AG04449 (cell line): ENCODE measurements at regions of chr7 and their contacts with region 1.

Region 1: GRCh38 chr7:78510580-78511188 is 712.1 kb downstream of the PHTF2 start:
- DNase-seq: no peak
- H3K4me3 ChIP-seq: no peak overlapping the region
- CTCF ChIP-seq: peak; percentile 81

Region 2: GRCh38 chr7:78134256-78134655 is 376.4 kb before region 1 on chr7:
- CTCF ChIA-PET with region 1: interaction called, 15 read pairs
- POLR2A ChIA-PET with region 1: no interaction called
- DNase-seq: no peak
- H3K4me3 ChIP-seq: no peak overlapping the region
- CTCF ChIP-seq: peak; percentile 57

Region 3: DNA sequence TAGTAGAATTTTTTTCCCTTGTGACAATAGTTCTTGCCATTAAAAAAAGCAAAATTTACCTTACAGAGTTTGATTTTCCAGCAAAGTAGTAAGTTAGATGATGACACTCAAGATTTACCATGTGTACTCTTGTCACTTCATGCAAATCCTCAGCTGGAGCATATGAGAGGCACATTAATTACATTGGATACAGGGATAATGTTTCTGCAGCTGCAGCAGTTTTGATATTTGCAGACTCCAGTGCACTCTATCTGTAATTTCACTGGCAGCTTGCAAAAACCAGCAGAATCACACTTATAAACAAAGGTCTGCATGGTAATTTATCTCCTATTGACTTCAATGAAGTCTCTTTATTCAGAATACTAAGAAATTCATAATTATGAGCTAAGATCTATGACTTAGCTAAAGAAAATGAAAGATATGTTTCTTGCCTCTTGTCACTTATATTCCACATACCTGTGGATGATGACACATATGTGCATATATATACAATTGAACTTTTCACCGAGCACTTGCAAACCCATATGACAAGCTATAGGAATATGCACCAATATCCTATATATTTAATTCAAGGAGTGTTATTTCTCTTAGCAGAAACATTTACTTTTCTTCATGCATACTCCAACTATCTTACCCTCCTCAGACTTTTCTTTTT is 181.6 kb before region 1 on chr7:
- CTCF ChIA-PET with region 1: no interaction called
- POLR2A ChIA-PET with region 1: no interaction called
- DNase-seq: no peak
- H3K4me3 ChIP-seq: no peak overlapping the region
- CTCF ChIP-seq: no peak

Region 4: DNA sequence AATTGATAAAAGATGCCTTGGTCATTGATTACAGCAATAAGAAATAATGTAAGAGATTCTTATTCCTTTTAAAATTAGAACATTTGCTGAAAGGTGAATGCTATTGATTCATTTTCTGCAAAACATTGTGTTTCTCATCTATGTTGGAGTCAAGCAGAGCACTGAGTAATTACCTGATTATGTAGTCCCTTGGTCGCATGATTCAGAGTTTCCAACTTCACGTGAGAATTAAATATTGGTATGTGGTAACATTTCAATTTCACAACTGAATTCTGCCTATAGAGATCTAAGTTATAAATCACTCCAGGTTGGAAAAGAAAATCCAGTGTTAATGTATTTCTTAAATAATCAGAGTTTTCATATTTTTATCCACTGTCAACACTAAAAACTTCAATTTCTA is 10.7 kb before region 1 on chr7:
- CTCF ChIA-PET with region 1: interaction called, 11 read pairs
- POLR2A ChIA-PET with region 1: no interaction called
- DNase-seq: no peak
- H3K4me3 ChIP-seq: no peak overlapping the region
- CTCF ChIP-seq: no peak

Region 5: DNA sequence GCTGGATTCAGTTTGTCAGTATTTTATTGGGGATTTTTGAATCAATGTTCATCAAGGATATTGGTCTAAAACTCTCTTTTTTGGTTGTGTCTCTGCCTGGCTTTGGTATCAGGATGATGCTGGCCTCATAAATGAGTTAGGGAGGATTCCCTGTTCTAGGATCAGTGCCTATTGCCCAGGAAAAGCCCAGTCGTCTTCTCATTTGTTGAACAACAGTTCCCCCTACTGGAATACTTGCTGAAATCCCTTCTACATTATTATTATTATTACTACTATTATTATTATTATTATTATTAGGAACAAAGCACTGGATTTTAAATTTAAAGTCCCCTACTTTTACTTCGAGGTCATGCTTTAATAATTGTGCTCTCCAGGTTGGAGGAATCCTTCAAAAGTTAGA is 413.9 kb after region 1 on chr7:
- CTCF ChIA-PET with region 1: interaction called, 11 read pairs
- POLR2A ChIA-PET with region 1: no interaction called
- DNase-seq: no peak
- H3K4me3 ChIP-seq: no peak overlapping the region
- CTCF ChIP-seq: peak; percentile 11

Region 6: GRCh38 chr7:79176859-79177477 is 666.3 kb after region 1 on chr7:
- CTCF ChIA-PET with region 1: interaction called, 15 read pairs
- POLR2A ChIA-PET with region 1: interaction called, 3 read pairs
- DNase-seq: no peak
- H3K4me3 ChIP-seq: no peak overlapping the region
- CTCF ChIP-seq: peak; percentile 61